RWPE1 (cell line): ENCODE measurements at regions of chr3 and their contacts with region 1.

Region 1: GRCh38 chr3:183085634-183086390 is 13.5 kb downstream of the MCCC1 start:
- DNase-seq: no peak
- H3K27ac ChIP-seq: no peak overlapping the region
- CTCF ChIP-seq: no peak

Region 2: GRCh38 chr3:183073839-183074238 is 12.0 kb before region 1 on chr3:
- CTCF ChIA-PET with region 1: interaction called, 13 read pairs
- POLR2A ChIA-PET with region 1: no interaction called
- DNase-seq: no peak
- H3K27ac ChIP-seq: no peak overlapping the region
- CTCF ChIP-seq: no peak

Region 3: DNA sequence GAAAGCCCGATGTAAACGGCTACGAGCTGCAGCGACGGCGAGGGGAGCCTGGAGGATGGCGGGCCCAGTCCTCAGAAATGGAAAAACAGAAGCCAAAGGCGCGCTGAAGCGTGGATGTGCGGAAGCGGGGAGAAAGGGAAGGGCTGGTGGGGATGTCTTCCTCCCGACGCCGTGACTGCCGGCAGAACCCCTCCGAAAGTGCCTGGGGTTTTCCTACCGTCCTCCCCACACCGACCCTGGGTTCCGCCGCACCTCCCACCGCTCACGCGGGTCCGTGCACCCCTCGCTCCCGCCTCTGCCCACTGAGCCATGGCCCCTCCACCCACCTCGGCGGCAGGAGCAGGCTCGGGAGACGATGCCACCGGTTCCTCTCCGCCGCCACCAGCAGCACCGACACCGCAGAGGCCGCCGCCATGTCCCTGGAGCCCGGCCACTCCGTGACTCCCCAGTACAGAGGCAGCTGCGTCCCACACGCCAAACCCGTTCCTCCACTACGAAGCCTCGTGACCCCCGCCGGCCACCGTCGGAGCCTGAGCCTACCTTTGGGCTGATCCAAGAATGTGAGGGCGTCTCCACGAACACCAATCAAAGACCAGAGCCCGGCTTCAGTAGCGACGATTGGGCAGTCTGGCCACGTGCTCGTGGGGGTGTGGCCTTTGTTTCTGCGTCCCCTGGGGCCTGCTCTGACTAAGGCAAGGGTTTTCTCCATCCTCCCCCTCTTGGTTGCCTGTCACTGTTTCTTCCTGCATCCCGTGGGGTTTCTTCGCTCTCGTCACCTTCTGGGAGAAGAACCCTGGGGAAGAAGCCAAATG is 13.4 kb after region 1 on chr3 and contains the start of gene MCCC1:
- CTCF ChIA-PET with region 1: no interaction called
- POLR2A ChIA-PET with region 1: no interaction called
- DNase-seq: peak; percentile 99
- H3K27ac ChIP-seq: peak within 1 kb of the TSS; percentile 77
- CTCF ChIP-seq: no peak

Region 4: DNA sequence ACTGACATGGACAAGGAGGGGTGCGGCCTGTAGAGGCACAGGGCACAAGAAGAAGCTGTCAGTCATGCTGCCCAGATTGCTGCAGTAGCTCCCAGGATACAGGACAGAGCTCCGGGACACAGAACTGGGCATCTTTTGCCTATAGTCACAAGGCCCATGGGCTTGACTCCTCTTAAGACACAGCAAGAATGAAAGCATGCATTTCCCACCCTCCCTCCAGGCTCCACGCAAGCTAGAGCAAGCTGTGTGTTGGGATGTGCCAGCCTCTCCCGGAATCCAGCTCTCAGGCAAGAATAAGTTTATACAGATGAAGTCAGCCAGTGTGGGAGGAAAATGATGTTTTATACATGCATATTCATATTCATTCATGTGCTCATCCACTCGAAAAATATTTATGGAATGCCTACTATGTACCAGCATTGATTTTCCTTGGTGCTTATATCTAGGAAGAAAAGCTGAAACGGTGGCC is 406.9 kb after region 1 on chr3:
- CTCF ChIA-PET with region 1: no interaction called
- POLR2A ChIA-PET with region 1: no interaction called
- DNase-seq: no peak
- H3K27ac ChIP-seq: no peak overlapping the region
- CTCF ChIP-seq: no peak